Panc1 (cell line): ENCODE measurements at regions of chr1 and their contacts with region 1.

Region 1: DNA sequence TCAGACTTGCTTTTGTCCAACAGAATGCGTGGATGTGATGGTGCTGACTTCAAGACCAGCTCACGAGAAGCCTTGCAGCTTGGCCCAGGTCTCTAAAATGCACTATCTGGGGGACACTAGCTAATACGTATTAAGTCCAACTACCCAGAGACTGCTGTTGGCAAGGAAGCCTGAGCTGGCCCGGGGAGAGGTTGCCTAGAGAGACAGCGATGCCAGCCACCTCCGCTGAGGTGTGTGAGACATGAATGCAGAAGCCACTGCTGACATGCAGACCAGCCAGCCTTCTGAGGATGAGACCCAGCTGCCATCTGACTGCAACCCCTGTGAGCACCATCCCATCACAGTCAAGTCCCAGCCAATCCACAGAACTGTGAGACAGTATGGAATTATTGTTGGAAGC is 32.5 kb downstream of the THAP3 start:
- DNase-seq: no peak
- ATAC-seq: no peak
- H3K4me3 ChIP-seq: no peak overlapping the region
- H3K27ac ChIP-seq: no peak overlapping the region
- H3K4me1 ChIP-seq: no peaks in the 10 kb centered on the region
- H3K27me3 ChIP-seq: no peaks in the 10 kb centered on the region
- CTCF ChIP-seq: no peak

Region 2: GRCh38 chr1:6634371-6635052 is 22.6 kb before region 1 on chr1:
- CTCF ChIA-PET with region 1: no interaction called
- POLR2A ChIA-PET with region 1: interaction called, 11 read pairs
- in situ Hi-C with region 1: no loop called
- intact Hi-C with region 1: no loop called
- DNase-seq: no peak
- ATAC-seq: peak; percentile 80
- H3K4me3 ChIP-seq: no peak overlapping the region
- H3K27ac ChIP-seq: no peak overlapping the region
- H3K4me1 ChIP-seq: no peaks in the 10 kb centered on the region
- H3K27me3 ChIP-seq: no peaks in the 10 kb centered on the region
- CTCF ChIP-seq: peak; percentile 50; the same call in 1 of the 2 replicates

Region 3: GRCh38 chr1:6898974-6899539 is 241.9 kb after region 1 on chr1:
- CTCF ChIA-PET with region 1: no interaction called
- POLR2A ChIA-PET with region 1: no interaction called
- in situ Hi-C with region 1: no loop called
- intact Hi-C with region 1: no loop called
- DNase-seq: no peak
- ATAC-seq: no peak
- H3K4me3 ChIP-seq: no peak overlapping the region
- H3K27ac ChIP-seq: no peak overlapping the region
- H3K4me1 ChIP-seq: no peaks in the 10 kb centered on the region
- H3K27me3 ChIP-seq: no peaks in the 10 kb centered on the region
- CTCF ChIP-seq: no peak